PC-3 (cell line): ENCODE measurements at regions of chr1 and their contacts with region 1.

Region 1: GRCh38 chr1:119613769-119614720 is 34.0 kb downstream of the ZNF697 start:
- DNase-seq: peak; percentile 90
- ATAC-seq: peak; percentile 93
- H3K4me3 ChIP-seq: no peak overlapping the region
- H3K27ac ChIP-seq: no peak overlapping the region
- H3K4me1 ChIP-seq: no peaks in the 10 kb centered on the region
- H3K27me3 ChIP-seq: no peaks in the 10 kb centered on the region
- CTCF ChIP-seq: peak; percentile 75

Region 2: DNA sequence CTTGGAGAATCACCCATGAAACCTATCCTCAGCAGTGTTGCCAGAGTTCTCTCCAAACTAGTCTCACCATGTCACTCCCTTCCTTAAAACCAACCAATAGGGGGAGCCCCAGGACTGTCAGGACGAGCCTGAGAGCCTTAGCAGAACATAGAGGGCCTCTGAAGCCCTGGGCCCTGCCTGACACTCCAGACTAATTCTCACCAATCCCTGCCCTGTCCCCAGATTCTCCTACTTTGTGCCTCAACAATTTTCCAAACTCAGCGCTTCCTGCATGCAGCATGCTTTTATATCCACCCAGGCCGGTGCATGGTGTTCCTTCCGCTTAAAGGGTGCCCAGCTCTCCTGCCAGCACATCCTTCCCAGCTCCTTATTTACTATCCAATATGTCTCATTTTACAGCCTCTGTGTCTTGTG is 64.3 kb before region 1 on chr1:
- CTCF ChIA-PET with region 1: no interaction called
- POLR2A ChIA-PET with region 1: no interaction called
- intact Hi-C with region 1: loop called (anchors 2 kb)
- DNase-seq: peak; percentile 84
- ATAC-seq: peak; percentile 98
- H3K4me3 ChIP-seq: no peak overlapping the region
- H3K27ac ChIP-seq: no peak overlapping the region
- H3K4me1 ChIP-seq: no peaks in the 10 kb centered on the region
- H3K27me3 ChIP-seq: no peaks in the 10 kb centered on the region
- CTCF ChIP-seq: peak; percentile 72

Region 3: GRCh38 chr1:119647734-119648619 is 33.9 kb after region 1 on chr1 and contains the start of gene ZNF697:
- CTCF ChIA-PET with region 1: no interaction called
- POLR2A ChIA-PET with region 1: no interaction called
- intact Hi-C with region 1: loop called (anchors 1 kb)
- DNase-seq: peak; percentile 95
- ATAC-seq: peak; percentile 95
- H3K4me3 ChIP-seq: peak within 1 kb of the TSS; percentile 92
- H3K27ac ChIP-seq: peak within 1 kb of the TSS; percentile 74
- H3K4me1 ChIP-seq: peaks cover 20% of the 10 kb centered on the region
- H3K27me3 ChIP-seq: no peaks in the 10 kb centered on the region
- CTCF ChIP-seq: no peak; the same call in 1 of the 2 replicates
- total RNA-seq, gene ZNF697: 3.9 and 5.3 TPM in 2 replicates

Region 4: DNA sequence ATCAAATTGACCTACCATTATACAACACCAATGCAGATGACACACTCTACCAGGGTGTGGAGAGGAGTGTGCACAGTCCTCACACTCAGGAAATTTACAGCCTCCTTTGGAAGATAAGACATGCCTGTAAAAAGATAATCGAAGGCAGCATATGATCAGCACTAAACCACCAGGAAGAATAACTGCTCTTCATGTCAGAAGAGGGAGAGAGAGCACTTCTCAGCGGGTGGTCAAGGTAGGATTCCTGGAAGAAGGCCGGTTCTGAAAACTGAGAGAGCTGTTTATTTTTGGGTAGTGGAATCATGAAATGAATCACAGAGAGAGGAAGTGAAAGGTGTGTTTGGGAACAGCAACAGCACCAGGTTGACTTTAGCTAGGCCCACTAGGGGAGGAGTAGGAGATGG is 48.0 kb after region 1 on chr1:
- CTCF ChIA-PET with region 1: interaction called, 3 read pairs
- POLR2A ChIA-PET with region 1: interaction called, 4 read pairs
- intact Hi-C with region 1: loop called (anchors 1 kb)
- DNase-seq: peak; percentile 25
- ATAC-seq: peak; percentile 55
- H3K4me3 ChIP-seq: no peak overlapping the region
- H3K27ac ChIP-seq: peak overlapping the region; percentile 6; the same call in 1 of the 2 replicates
- H3K4me1 ChIP-seq: peaks cover 28% of the 10 kb centered on the region
- H3K27me3 ChIP-seq: no peaks in the 10 kb centered on the region
- CTCF ChIP-seq: no peak

Region 5: GRCh38 chr1:119675349-119676345 is 61.6 kb after region 1 on chr1:
- CTCF ChIA-PET with region 1: interaction called, 4 read pairs
- POLR2A ChIA-PET with region 1: no interaction called
- intact Hi-C with region 1: loop called (anchors 1 kb)
- DNase-seq: peak; percentile 96
- ATAC-seq: peak; percentile 56
- H3K4me3 ChIP-seq: peak overlapping the region; percentile 70
- H3K27ac ChIP-seq: peak overlapping the region; percentile 98
- H3K4me1 ChIP-seq: peaks cover 40% of the 10 kb centered on the region
- H3K27me3 ChIP-seq: no peaks in the 10 kb centered on the region
- CTCF ChIP-seq: peak; percentile 93

Region 6: DNA sequence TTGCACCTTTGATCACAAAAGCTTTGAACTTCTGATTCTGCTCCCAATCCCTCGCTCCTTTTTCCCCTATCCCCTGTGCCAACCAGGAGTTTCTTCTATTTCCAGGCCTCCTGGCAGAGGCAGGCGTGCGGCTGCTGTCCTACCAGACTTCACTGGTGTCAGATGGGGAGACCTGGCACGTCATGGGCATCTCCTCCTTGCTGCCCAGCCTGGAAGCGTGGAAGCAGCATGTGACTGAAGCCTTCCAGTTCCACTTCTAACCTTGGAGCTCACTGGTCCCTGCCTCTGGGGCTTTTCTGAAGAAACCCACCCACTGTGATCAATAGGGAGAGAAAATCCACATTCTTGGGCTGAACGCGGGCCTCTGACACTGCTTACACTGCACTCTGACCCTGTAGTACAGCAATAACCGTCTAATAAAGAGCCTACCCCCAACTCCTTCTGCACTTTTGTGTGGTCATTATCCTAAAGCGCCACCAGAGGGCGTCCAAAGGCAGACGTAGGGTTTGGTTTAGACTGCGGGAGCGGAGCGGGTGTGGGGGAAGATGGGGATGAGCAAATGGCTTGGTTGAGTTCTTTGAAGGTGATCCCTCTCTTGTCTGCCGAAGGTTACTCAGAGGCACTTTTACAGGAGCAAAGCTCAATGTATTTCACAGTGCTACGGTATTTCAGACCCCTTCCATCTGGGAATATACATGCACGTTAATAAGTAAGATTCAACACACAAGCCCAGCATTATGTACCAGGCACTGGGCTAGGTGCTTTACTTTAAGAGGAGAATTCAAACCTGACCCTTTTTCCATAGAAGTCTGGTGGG is 129.9 kb after region 1 on chr1:
- CTCF ChIA-PET with region 1: no interaction called
- POLR2A ChIA-PET with region 1: no interaction called
- intact Hi-C with region 1: loop called (anchors 10 kb)
- DNase-seq: peak; percentile 81
- ATAC-seq: peak; percentile 72
- H3K4me3 ChIP-seq: no peak overlapping the region
- H3K27ac ChIP-seq: no peak overlapping the region
- H3K4me1 ChIP-seq: no peaks in the 10 kb centered on the region
- H3K27me3 ChIP-seq: no peaks in the 10 kb centered on the region
- CTCF ChIP-seq: peak; percentile 92